ENCODE measurements at regions of chr19 and their contacts with region 1.

Region 1: DNA sequence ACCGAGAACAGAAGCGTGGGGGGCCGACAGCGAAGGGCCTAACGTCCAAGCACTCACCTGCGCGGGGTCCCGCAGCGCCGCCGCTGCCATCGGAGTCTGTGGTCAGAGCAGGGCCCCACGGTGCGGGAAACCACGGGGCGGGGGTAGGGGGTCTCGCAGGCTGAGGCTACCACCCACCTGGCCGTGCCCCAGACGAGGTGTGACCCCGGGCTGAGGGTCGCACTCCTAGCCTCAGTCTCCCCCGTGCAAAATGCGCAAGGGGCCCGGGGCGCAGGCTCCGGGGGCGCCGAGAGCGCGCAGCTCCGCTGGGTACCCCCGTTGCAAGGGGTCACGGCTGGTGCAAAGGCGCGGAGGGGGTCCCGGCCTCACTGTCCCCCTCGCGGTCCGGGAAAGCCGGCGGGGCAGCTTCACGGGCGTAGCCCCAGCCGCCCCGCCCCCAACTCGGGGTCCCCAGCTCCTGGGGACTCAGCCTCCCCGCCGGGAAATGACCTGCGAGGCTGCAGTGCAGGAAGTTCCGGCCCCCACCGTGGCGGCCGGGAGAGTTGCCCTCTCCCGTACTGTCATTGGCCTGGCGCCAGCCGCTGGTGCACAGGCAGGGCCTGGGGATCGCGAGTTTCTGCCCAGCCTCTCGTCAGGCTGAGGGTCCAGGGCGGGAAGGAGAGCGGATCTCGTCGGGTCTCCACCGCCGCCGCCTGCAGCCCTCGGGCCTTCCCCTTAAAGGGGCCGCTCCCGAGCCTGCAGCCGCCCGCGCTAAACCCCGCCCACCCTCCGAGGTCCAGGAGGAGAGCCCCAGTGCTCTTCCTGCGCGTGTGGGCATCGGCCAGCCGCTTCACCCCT is at the start of gene ZNF792:
- DNase-seq: peak in 13 of 14 experiments; percentile 9 to 65 (median 46)
- ATAC-seq: peak; percentile 63
- H3K4me3 ChIP-seq: peak within 1 kb of the TSS; percentile 93
- H3K4me3 Mint-ChIP-seq: peak within 1 kb of the TSS; percentile 96
- H3K27ac ChIP-seq: peak within 1 kb of the TSS; percentile 46 to 57
- H3K27ac Mint-ChIP-seq: peak within 1 kb of the TSS; percentile 89
- H3K4me1 ChIP-seq: peaks cover 36% of the 10 kb centered on the region
- H3K4me1 Mint-ChIP-seq: peaks cover 29% of the 10 kb centered on the region
- H3K27me3 ChIP-seq: no peaks in the 10 kb centered on the region
- H3K27me3 Mint-ChIP-seq: no peaks in the 10 kb centered on the region
- CTCF ChIP-seq: no peak
- total RNA-seq, gene ZNF792: 6.8 to 8.9 TPM

Region 2: GRCh38 chr19:33501693-33502356 is 1462.0 kb before region 1 on chr19:
- CTCF ChIA-PET with region 1: no interaction called
- POLR2A ChIA-PET with region 1: no interaction called
- intact Hi-C with region 1: no loop called
- DNase-seq: no peak
- ATAC-seq: no peak
- H3K4me3 ChIP-seq: no peak overlapping the region
- H3K4me3 Mint-ChIP-seq: no peak overlapping the region
- H3K27ac ChIP-seq: no peak overlapping the region
- H3K27ac Mint-ChIP-seq: no peak overlapping the region
- H3K4me1 ChIP-seq: peaks cover 3% of the 10 kb centered on the region
- H3K4me1 Mint-ChIP-seq: no peaks in the 10 kb centered on the region
- H3K27me3 ChIP-seq: no peaks in the 10 kb centered on the region
- H3K27me3 Mint-ChIP-seq: no peaks in the 10 kb centered on the region
- CTCF ChIP-seq: no peak

Region 3: DNA sequence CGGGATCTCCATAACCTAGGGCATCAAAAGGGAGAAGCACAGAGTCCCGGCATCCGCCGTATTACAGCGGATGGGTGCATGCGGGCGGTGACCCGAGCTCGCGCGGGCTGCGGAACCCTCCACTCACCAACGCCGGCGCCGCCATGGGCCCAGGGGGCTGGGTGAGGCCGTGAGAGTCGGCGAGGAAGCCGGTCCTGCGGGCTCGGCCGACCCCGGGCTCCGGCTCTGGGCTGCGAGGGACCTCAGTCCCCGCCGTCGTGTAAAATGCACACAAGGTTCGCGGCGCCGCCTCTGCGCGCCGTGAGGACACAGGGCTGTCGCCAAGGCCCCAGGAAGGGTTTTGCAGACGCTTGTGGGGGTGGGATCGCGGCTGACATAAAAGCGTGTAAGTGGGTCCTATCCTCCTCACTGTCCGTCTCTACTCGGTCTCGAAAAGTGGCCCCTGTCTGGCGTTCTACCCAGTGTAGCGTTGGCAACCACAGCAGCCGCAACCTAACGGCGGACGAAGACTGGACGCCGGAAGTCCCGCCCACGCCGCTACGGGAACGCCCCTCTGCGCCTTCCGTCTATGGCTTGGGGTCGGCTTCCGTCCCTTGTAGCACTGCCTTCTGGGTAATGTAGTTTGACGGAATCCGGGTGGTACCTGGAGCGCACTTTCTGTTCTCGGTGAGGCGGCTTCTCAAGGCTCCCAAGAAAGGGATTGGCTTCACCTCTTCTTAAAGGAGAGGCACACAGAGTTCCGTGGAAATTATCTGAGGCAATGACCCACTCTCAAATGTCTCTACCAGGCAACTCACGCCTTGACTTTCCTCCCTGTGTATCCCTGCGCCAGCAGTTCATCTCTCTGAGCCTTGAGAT is 190.9 kb before region 1 on chr19 and contains the start of gene ZNF599:
- CTCF ChIA-PET with region 1: no interaction called
- POLR2A ChIA-PET with region 1: no interaction called
- intact Hi-C with region 1: loop called in 1 of 2 experiments (anchors 5 kb)
- DNase-seq: peak; percentile 80 to 96 (median 88)
- ATAC-seq: peak; percentile 94
- H3K4me3 ChIP-seq: peak within 1 kb of the TSS; percentile 90
- H3K4me3 Mint-ChIP-seq: peak within 1 kb of the TSS; percentile 99
- H3K27ac ChIP-seq: peak within 1 kb of the TSS; percentile 43 to 74
- H3K27ac Mint-ChIP-seq: peak within 1 kb of the TSS; percentile 93
- H3K4me1 ChIP-seq: peaks cover 16% of the 10 kb centered on the region
- H3K4me1 Mint-ChIP-seq: peaks cover 20% of the 10 kb centered on the region
- H3K27me3 ChIP-seq: no peaks in the 10 kb centered on the region
- H3K27me3 Mint-ChIP-seq: peaks cover 14% of the 10 kb centered on the region
- CTCF ChIP-seq: no peak
- total RNA-seq, gene ZNF599: 2.0 to 2.9 TPM

Region 4: DNA sequence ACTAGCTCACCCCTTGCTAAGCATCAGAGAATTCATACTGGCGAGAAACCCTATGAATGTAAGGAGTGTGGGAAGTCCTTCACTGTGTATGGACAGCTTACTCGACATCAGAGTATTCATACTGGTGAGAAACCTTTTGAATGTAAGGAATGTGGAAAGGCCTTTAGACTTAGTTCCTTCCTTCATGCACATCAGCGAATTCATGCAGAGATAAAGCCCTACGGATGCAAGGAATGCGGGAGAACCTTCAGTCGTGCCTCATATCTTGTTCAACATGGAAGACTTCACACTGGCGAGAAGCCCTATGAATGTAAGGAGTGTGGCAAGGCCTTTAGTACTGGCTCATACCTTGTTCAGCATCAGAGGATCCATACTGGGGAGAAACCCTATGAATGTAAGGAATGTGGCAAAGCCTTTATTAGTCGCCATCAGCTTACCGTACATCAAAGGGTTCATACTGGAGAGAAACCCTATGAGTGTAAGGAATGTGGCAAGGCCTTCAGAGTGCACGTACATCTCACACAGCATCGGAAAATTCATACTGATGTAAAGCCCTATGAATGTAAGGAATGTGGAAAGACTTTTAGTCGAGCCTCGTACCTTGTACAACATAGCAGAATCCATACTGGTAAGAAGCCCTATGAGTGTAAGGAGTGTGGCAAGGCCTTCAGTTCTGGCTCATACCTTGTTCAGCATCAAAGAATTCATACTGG is 19.8 kb before region 1 on chr19:
- CTCF ChIA-PET with region 1: no interaction called
- POLR2A ChIA-PET with region 1: interaction called, 5 read pairs
- intact Hi-C with region 1: loop called in 1 of 2 experiments (anchors 2 kb)
- DNase-seq: no peak
- ATAC-seq: no peak
- H3K4me3 ChIP-seq: no peak overlapping the region
- H3K4me3 Mint-ChIP-seq: no peak overlapping the region
- H3K27ac ChIP-seq: no peak overlapping the region
- H3K27ac Mint-ChIP-seq: no peak overlapping the region
- H3K4me1 ChIP-seq: no peaks in the 10 kb centered on the region
- H3K4me1 Mint-ChIP-seq: no peaks in the 10 kb centered on the region
- H3K27me3 ChIP-seq: no peaks in the 10 kb centered on the region
- H3K27me3 Mint-ChIP-seq: no peaks in the 10 kb centered on the region
- CTCF ChIP-seq: no peak

Region 5: GRCh38 chr19:34999498-35000341 is 35.9 kb after region 1 on chr19 and contains the start of gene GRAMD1A:
- CTCF ChIA-PET with region 1: no interaction called
- POLR2A ChIA-PET with region 1: interaction called, 15 read pairs
- intact Hi-C with region 1: no loop called
- DNase-seq: peak; percentile 50 to 85 (median 74)
- ATAC-seq: peak; percentile 28
- H3K4me3 ChIP-seq: peak within 1 kb of the TSS; percentile 59
- H3K4me3 Mint-ChIP-seq: peak within 1 kb of the TSS; percentile 99
- H3K27ac ChIP-seq: peak within 1 kb of the TSS; percentile 79 to 92
- H3K27ac Mint-ChIP-seq: peak within 1 kb of the TSS; percentile 98
- H3K4me1 ChIP-seq: peaks cover 89% of the 10 kb centered on the region
- H3K4me1 Mint-ChIP-seq: peaks cover 72% of the 10 kb centered on the region
- H3K27me3 ChIP-seq: no peaks in the 10 kb centered on the region
- H3K27me3 Mint-ChIP-seq: no peaks in the 10 kb centered on the region
- CTCF ChIP-seq: no peak
- total RNA-seq, gene GRAMD1A: 221 to 229 TPM

Region 6: GRCh38 chr19:35044317-35045117 is 80.7 kb after region 1 on chr19:
- CTCF ChIA-PET with region 1: no interaction called
- POLR2A ChIA-PET with region 1: no interaction called
- intact Hi-C with region 1: no loop called
- DNase-seq: peak in 13 of 14 experiments; percentile 44 to 76 (median 58)
- ATAC-seq: peak; percentile 12
- H3K4me3 ChIP-seq: no peak overlapping the region
- H3K4me3 Mint-ChIP-seq: peak overlapping the region; percentile 81
- H3K27ac ChIP-seq: no peak overlapping the region
- H3K27ac Mint-ChIP-seq: no peak overlapping the region
- H3K4me1 ChIP-seq: peaks cover 43% of the 10 kb centered on the region
- H3K4me1 Mint-ChIP-seq: peaks cover 44% of the 10 kb centered on the region
- H3K27me3 ChIP-seq: no peaks in the 10 kb centered on the region
- H3K27me3 Mint-ChIP-seq: peaks cover 20% of the 10 kb centered on the region
- CTCF ChIP-seq: peak; percentile 98

Measured in CD4-positive, alpha-beta T cell (primary cell).